ENCODE measurements at regions of chr3 and their contacts with region 1.

Region 1: DNA sequence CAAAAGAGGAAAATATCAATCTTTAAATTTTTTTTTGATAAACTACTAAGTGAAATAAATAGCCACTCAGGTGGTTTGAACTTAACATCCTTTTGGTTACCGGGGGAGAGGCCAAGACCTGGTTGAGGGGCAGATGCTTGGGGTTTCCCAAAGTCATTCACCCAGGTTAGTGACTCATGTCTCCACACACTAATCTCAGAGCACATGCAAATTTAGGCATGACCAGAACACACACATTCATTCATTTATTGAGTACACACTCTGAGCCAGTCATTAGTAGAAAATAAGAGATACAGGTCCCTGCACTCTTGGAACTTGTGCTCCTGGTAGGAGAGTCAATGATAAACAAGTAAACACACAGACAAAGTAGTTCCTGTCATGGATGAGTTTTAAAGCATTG is 7.3 kb downstream of the ILDR1 start:
- DNase-seq: peak; percentile 58
- H3K4me3 Mint-ChIP-seq: no peak overlapping the region
- H3K27ac Mint-ChIP-seq: no peak overlapping the region
- H3K4me1 Mint-ChIP-seq: peaks cover 25% of the 10 kb centered on the region
- H3K27me3 Mint-ChIP-seq: peaks cover 27% of the 10 kb centered on the region

Region 2: GRCh38 chr3:121957674-121958415 is 56.9 kb before region 1 on chr3:
- CTCF ChIA-PET with region 1: no interaction called
- POLR2A ChIA-PET with region 1: no interaction called
- intact Hi-C with region 1: no loop called
- DNase-seq: no peak
- H3K4me3 Mint-ChIP-seq: no peak overlapping the region
- H3K27ac Mint-ChIP-seq: no peak overlapping the region
- H3K4me1 Mint-ChIP-seq: no peaks in the 10 kb centered on the region
- H3K27me3 Mint-ChIP-seq: no peaks in the 10 kb centered on the region

Region 3: GRCh38 chr3:122074621-122075265 is 60.0 kb after region 1 on chr3:
- CTCF ChIA-PET with region 1: no interaction called
- POLR2A ChIA-PET with region 1: no interaction called
- intact Hi-C with region 1: loop called (anchors 5 kb)
- DNase-seq: peak; percentile 39
- H3K4me3 Mint-ChIP-seq: no peak overlapping the region
- H3K27ac Mint-ChIP-seq: peak overlapping the region; percentile 50
- H3K4me1 Mint-ChIP-seq: peaks cover 26% of the 10 kb centered on the region
- H3K27me3 Mint-ChIP-seq: peaks cover 19% of the 10 kb centered on the region

Region 4: DNA sequence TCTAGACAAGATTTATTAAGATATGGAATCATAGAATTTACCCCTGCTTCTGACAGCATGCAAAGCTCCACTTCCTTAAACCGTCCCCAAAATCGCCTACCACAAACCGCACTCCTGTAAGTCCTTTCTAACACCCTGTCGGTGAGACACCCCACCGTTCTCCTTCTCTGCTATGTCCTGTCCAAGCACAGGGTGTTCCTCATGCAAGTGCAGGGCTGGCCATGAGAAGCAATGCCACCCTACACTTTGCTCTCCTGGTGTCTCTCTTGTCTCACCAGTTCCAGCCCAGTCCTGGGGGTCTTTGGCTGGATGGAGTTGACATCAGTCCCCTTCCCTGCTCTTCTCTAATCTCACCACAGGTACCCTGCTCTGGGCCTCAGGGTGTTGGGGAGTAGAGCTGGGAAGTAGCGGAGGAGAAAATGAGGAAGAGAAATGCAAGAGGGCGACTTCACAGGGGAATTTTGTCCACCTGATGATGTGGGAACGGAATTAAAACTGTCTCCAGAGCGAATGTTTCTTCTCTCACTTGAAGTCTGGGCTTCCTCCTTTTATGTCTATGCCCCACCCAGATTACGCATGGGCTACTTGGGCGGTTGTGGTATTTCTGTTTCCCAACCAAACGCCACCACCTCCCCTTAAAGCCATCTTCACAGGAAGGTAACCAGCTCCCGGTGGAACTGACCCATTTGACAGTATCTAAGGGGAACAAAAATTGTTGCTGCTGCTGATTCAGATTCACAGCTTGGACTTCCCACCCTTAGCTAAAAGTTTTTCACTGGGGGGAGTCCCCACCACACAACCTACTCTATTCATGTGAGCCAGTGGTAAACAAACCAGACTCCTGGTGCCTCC is 218.6 kb after region 1 on chr3:
- CTCF ChIA-PET with region 1: no interaction called
- POLR2A ChIA-PET with region 1: no interaction called
- intact Hi-C with region 1: no loop called
- DNase-seq: peak; percentile 44
- H3K4me3 Mint-ChIP-seq: no peak overlapping the region
- H3K27ac Mint-ChIP-seq: no peak overlapping the region
- H3K4me1 Mint-ChIP-seq: peaks cover 28% of the 10 kb centered on the region
- H3K27me3 Mint-ChIP-seq: peaks cover 5% of the 10 kb centered on the region

Measured in activated CD4-positive, alpha-beta memory T cell treated with anti-CD3 and anti-CD28 coated beads for 36 hours (primary cell).